ENCODE measurements at regions of chr2 and their contacts with region 1.

Region 1: GRCh38 chr2:104125096-104125495 is 728.8 kb upstream of the POU3F3 start:
- DNase-seq: no peak
- ATAC-seq: no peak
- H3K4me3 ChIP-seq: no peak overlapping the region
- H3K27ac ChIP-seq: no peak overlapping the region
- H3K4me1 ChIP-seq: no peaks in the 10 kb centered on the region
- H3K27me3 ChIP-seq: no peaks in the 10 kb centered on the region
- CTCF ChIP-seq: no peak
- EP300 ChIP-seq: no peak
- POLR2A ChIP-seq: no peak
- RAD21 ChIP-seq: no peak

Region 2: DNA sequence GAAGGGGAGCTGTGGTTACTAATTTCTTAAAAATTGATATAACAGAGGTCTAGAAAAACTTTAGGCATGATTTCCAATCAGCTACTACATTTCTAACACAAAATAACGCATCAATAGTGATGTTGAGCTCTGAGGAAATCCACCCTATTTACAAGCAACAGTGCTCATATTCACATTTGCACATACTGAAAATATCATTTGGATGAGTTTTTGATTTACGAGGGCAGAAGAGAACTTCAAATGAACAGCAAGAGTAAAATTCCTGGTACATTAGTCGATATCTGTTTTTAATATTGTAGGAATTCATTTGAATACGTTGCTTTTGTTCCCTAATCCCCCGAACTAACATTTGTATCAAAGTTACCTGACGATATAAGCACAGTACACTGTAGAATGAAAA is 32.2 kb before region 1 on chr2:
- CTCF ChIA-PET with region 1: no interaction called
- POLR2A ChIA-PET with region 1: no interaction called
- in situ Hi-C with region 1: no loop called
- intact Hi-C with region 1: loop called (anchors 2 kb)
- DNase-seq: no peak
- ATAC-seq: no peak
- H3K4me3 ChIP-seq: no peak overlapping the region
- H3K27ac ChIP-seq: no peak overlapping the region
- H3K4me1 ChIP-seq: no peaks in the 10 kb centered on the region
- H3K27me3 ChIP-seq: no peaks in the 10 kb centered on the region
- CTCF ChIP-seq: no peak
- EP300 ChIP-seq: no peak
- POLR2A ChIP-seq: no peak
- RAD21 ChIP-seq: no peak